MCF 10A (cell line): ENCODE measurements at regions of chr6 and their contacts with region 1.

Region 1: GRCh38 chr6:11064836-11065235 is 20.7 kb upstream of the ELOVL2 start:
- DNase-seq: no peak
- H3K4me3 Mint-ChIP-seq: no peak overlapping the region
- H3K27ac Mint-ChIP-seq: no peak overlapping the region
- H3K4me1 Mint-ChIP-seq: no peaks in the 10 kb centered on the region
- H3K27me3 Mint-ChIP-seq: no peaks in the 10 kb centered on the region
- CTCF ChIP-seq: no peak

Region 2: DNA sequence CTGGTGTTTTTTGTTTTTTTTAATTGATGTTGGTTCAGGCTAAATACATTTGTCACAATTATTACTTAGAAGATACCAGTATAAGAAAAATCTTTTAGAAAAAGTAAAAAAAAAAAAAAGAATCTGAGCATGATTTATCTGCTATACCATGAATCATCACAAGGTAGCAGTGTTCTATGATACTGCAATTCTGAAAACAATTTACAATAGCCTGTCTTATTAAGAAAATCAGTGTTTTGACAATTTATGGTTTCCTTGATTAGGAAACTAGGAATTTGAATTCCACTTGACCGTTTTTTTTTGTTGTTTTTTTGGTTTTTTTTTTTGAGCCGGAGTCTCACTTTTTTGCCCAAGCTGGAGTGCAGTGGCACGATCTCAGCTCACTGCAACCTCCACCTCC is 217.2 kb before region 1 on chr6:
- CTCF ChIA-PET with region 1: interaction called, 5 read pairs
- POLR2A ChIA-PET with region 1: no interaction called
- intact Hi-C with region 1: loop called (anchors 5 kb)
- DNase-seq: peak; percentile 11
- H3K4me3 Mint-ChIP-seq: no peak overlapping the region
- H3K27ac Mint-ChIP-seq: no peak overlapping the region
- H3K4me1 Mint-ChIP-seq: no peaks in the 10 kb centered on the region
- H3K27me3 Mint-ChIP-seq: peaks cover 11% of the 10 kb centered on the region
- CTCF ChIP-seq: peak; percentile 21

Region 3: GRCh38 chr6:10954590-10955010 is 110.2 kb before region 1 on chr6:
- CTCF ChIA-PET with region 1: interaction called, 285 read pairs
- POLR2A ChIA-PET with region 1: interaction called, 8 read pairs
- intact Hi-C with region 1: loop called (anchors 1 kb)
- DNase-seq: peak; percentile 75
- H3K4me3 Mint-ChIP-seq: no peak overlapping the region
- H3K27ac Mint-ChIP-seq: no peak overlapping the region
- H3K4me1 Mint-ChIP-seq: peaks cover 5% of the 10 kb centered on the region
- H3K27me3 Mint-ChIP-seq: no peaks in the 10 kb centered on the region
- CTCF ChIP-seq: peak; percentile 69

Region 4: DNA sequence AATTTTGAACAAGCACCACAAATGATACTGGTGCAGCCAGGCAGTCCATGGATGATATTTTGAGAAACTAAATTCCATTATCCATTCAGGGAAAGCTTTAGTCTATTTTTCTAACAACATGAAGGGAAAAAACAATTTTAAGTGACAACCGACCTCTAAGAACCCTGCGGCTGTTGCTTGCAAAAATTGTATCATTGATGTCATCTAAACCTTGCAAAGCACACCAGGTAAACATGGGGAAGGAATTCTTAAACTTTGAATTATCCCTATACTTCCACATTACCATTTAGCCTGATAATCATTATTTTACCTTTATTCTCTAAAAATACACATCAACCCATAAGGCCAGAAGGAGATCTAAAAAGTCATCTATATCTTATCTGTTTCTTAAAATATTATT is 18.1 kb before region 1 on chr6:
- CTCF ChIA-PET with region 1: no interaction called
- POLR2A ChIA-PET with region 1: no interaction called
- intact Hi-C with region 1: no loop called
- DNase-seq: no peak
- H3K4me3 Mint-ChIP-seq: no peak overlapping the region
- H3K27ac Mint-ChIP-seq: no peak overlapping the region
- H3K4me1 Mint-ChIP-seq: no peaks in the 10 kb centered on the region
- H3K27me3 Mint-ChIP-seq: peaks cover 18% of the 10 kb centered on the region
- CTCF ChIP-seq: no peak

Region 5: DNA sequence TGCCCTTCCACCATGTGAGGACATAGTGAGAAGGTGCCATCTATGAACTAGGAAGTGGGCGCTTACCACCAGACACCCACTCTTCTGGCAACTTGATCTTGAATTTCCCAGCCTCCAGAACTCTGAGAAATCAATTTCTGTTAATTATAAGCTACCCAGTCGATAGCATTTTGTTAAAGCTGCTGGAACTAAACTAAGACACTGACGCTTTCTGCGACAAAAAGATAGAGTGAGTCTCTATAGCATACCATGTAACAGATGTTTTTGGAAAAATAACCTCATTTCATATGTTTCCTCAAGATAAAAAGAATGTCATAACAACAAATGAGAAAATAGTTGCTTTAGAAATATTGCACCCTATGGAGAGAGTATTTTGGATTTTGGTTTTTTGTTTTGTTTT is 13.4 kb after region 1 on chr6:
- CTCF ChIA-PET with region 1: interaction called, 10 read pairs
- POLR2A ChIA-PET with region 1: interaction called, 3 read pairs
- intact Hi-C with region 1: no loop called
- DNase-seq: no peak
- H3K4me3 Mint-ChIP-seq: no peak overlapping the region
- H3K27ac Mint-ChIP-seq: no peak overlapping the region
- H3K4me1 Mint-ChIP-seq: peaks cover 7% of the 10 kb centered on the region
- H3K27me3 Mint-ChIP-seq: no peaks in the 10 kb centered on the region
- CTCF ChIP-seq: no peak